H1 (cell line): ENCODE measurements at regions of chr20 and their contacts with region 1.

Region 1: DNA sequence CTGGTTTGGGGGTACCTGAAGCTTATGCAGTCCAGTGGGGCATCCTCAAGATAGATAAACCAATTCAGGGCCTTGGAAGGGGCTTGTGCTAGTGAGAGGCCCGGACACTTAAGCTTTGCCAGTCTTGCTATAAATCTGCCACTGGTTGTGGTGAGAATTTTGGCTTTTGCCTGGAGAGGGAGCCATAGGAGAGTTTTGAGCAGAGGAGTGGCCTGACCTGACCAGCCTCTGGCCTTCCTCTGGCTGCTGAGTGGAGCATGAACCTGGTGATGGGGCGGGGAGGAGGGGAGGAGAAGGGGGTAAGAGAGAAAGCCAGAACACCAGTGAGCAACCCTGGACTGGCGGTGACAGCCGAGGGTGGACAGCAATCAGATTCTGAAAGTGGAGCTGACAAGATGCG is 7.1 kb downstream of the TMEM74B start:
- DNase-seq: peak; percentile 29 to 57
- H3K4me3 ChIP-seq: no peak overlapping the region
- H3K27ac ChIP-seq: no peak overlapping the region
- H3K4me1 ChIP-seq: peaks cover 0 to 2% (median 0%) of the 10 kb centered on the region in 4 experiments; a peak in 2 of 7 replicates
- H3K27me3 ChIP-seq: 0 out of 7 replicates have a peak, but pooled peaks cover 0 to 6% (median 0%) of the 10 kb centered on the region in 4 experiments
- CTCF ChIP-seq: peak; percentile 37 to 64 (median 59)
- EP300 ChIP-seq: no peak
- POLR2A ChIP-seq: no peak
- RAD21 ChIP-seq: peak; percentile 60 to 66

Region 2: DNA sequence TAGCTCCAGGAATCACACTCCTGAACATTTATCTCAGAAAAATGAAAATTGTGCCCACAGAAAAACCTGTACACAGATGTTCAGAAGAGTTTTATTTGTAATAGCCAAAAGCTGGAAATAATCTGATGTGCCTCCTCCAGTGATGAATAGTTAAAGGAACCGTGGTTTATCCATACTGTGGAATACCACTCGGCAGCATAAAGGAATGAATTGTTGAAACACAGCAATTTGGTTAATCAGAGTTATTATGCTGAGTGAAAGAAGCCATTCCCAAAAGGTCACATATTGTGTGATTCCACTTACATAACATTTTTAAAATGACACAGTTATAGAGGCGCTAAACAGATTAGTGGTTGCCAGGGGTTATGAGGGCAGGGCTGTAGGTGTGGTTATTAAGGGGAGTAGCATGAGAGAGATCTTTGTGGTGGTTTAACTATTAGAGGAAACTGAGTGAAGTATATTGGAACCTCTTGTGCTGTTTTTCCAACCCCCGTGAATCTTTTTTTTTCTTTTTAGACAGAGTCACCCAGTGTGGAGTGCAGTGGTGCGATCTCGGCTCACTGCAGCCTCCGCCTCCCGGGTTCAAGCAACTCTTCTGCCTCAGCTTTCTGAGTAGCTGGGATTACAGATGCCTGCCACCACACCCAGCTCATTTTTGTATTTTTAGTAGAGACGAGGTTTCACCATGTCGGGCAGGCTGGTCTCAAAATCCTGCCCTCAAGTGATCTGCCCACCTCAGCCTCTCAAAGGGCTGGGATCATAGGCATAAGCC is 33.1 kb before region 1 on chr20:
- CTCF ChIA-PET with region 1: no interaction called
- POLR2A ChIA-PET with region 1: no interaction called
- DNase-seq: no peak
- H3K4me3 ChIP-seq: no peak overlapping the region
- H3K27ac ChIP-seq: no peak overlapping the region
- H3K4me1 ChIP-seq: no peaks in the 10 kb centered on the region
- H3K27me3 ChIP-seq: no peaks in the 10 kb centered on the region
- CTCF ChIP-seq: no peak
- EP300 ChIP-seq: no peak
- POLR2A ChIP-seq: no peak
- RAD21 ChIP-seq: no peak

Region 3: DNA sequence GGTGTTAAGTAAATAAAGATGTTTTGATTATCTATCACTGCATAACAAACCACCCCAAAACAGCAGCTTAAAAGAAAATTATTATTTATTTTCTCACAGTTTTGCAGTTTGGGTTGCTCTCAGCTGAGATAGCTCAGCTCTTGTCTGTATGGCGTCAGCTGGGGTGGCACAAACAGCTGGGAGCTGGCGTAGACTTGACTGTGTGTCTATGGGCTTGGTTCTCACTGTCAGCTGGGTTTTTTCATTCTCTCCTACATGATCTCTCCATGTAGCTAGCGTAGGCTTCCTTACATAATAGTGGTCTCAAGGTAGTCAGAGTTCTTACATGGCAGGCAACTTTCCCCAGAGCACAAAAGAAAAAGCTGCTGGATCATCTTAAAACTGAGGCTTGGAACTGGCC is 13.6 kb after region 1 on chr20:
- CTCF ChIA-PET with region 1: interaction called, 27 read pairs
- POLR2A ChIA-PET with region 1: interaction called, 9 read pairs
- DNase-seq: no peak
- H3K4me3 ChIP-seq: no peak overlapping the region
- H3K27ac ChIP-seq: no peak overlapping the region
- H3K4me1 ChIP-seq: peaks cover 0 to 7% (median 4%) of the 10 kb centered on the region in 4 experiments; a peak in 5 of 7 replicates
- H3K27me3 ChIP-seq: peaks cover 0 to 5% (median 4%) of the 10 kb centered on the region in 4 experiments; a peak in 3 of 7 replicates
- CTCF ChIP-seq: no peak
- EP300 ChIP-seq: no peak
- POLR2A ChIP-seq: no peak
- RAD21 ChIP-seq: no peak

Region 4: GRCh38 chr20:1266167-1266973 is 88.7 kb after region 1 on chr20 and contains the start of gene SNPH:
- CTCF ChIA-PET with region 1: no interaction called
- POLR2A ChIA-PET with region 1: no interaction called
- DNase-seq: peak; percentile 47 to 77
- H3K4me3 ChIP-seq: peak within 1 kb of the TSS; percentile 55 to 88 (median 72)
- H3K27ac ChIP-seq: no peak within 1 kb of the TSS
- H3K4me1 ChIP-seq: peaks cover 0 to 13% (median 1%) of the 10 kb centered on the region in 4 experiments; a peak in 4 of 7 replicates
- H3K27me3 ChIP-seq: peaks cover 0 to 1% (median 0%) of the 10 kb centered on the region in 4 experiments; a peak in 2 of 7 replicates
- CTCF ChIP-seq: no peak
- EP300 ChIP-seq: no peak
- POLR2A ChIP-seq: no peak
- RAD21 ChIP-seq: no peak
- total RNA-seq, gene SNPH: 4.0 and 4.9 TPM in 2 replicates